Dorsolateral prefrontal cortex (tissue), 120 donors: ENCODE measurements at regions of chr22 and their contacts with region 1.

Region 1: DNA sequence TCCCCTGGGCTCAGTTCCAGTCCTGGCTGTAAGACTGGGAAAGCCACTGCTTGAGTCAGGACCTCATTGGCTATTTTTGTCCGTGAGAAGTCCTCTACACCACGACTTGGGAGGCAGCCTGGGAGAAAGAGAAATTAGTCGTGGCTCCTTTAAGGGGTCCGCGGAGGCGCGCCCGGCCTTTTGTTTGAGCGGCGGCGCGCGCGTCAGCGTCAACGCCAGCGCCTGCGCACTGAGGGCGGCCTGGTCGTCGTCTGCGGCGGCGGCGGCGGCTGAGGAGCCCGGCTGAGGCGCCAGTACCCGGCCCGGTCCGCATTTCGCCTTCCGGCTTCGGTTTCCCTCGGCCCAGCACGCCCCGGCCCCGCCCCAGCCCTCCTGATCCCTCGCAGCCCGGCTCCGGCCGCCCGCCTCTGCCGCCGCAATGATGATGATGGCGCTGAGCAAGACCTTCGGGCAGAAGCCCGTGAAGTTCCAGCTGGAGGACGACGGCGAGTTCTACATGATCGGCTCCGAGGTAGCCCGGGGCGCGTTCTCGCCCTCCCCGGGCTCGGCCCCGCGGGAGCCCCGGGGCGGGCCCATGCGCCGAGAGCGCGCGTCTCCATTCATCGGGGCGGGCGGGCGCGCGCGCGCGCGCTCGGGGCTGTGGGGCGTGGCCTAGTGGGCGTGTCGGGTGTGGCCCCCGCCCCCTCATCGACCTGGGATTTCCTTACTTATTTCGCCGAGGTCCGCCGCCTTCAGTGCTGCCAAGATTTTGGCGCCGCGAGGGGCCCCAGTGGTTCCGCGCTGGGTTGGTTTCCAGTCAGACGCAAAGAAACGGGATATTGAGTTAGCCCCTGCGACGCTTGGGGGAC is at the start of gene SMARCB1:
- DNase-seq: peak; percentile 77 to 90 (median 86)
- H3K4me3 ChIP-seq: peak within 1 kb of the TSS; percentile 63 to 100 (median 91)
- H3K27ac ChIP-seq: peak within 1 kb of the TSS; percentile 88 to 100 (median 99)
- H3K27me3 ChIP-seq: no peaks in the 10 kb centered on the region
- CTCF ChIP-seq: peak in 15 of 56 donors; percentile 3 to 34 (median 11)
- total RNA-seq, gene SMARCB1: 60.2 to 91.8 (median 72.1) TPM

Region 2: GRCh38 chr22:23767673-23768548 is 19.1 kb before region 1 on chr22 and contains the start of gene CHCHD10:
- intact Hi-C with region 1: loop called in 1 of 2 experiments (anchors 2 kb)
- DNase-seq: peak; percentile 82 to 91 (median 88)
- H3K4me3 ChIP-seq: peak within 1 kb of the TSS; percentile 56 to 97 (median 80)
- H3K27ac ChIP-seq: peak within 1 kb of the TSS; percentile 52 to 98 (median 93)
- H3K27me3 ChIP-seq: no peaks in the 10 kb centered on the region
- CTCF ChIP-seq: peak; percentile 38 to 93 (median 86)
- total RNA-seq, gene CHCHD10: 87.5 to 320 (median 183) TPM